HCT116 (cell line): ENCODE measurements at regions of chr7 and their contacts with region 1.

Region 1: DNA sequence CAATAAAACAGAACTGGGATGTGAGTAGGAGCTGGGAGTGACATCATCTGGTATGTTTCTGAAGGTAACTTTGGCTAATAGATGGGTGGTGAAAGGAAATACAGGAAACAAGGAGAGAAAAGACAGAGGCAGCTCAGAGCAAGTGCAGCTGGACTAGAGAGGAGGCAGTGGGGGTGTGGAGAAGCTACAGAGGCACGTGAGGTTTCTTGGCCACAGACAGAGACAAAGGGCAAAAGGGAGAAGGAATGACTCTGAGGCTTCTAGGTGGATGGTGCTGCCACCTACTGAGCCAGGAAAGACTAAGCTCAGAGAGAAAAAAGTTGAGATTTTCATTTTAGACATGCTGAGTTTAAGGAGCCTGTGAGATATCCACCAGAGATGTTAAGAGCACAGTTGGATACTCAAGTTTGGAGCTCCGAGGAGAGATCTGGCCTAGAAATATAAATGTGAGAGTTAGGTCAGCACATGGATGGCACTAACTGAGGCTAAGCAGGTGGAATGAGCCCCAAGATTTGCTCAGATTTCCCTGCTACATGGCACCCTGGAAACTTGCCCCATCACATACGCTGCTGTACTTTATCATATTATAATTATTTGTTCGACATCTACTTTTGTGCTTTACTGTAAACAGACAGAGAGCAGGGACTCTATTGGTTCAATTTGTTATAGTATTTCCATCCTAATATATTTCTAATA is 293.0 kb upstream of the IMMP2L start:
- DNase-seq: peak; percentile 38
- ATAC-seq: peak; percentile 96
- H3K4me3 ChIP-seq: no peak overlapping the region
- H3K27ac ChIP-seq: no peak overlapping the region
- H3K4me1 ChIP-seq: no peaks in the 10 kb centered on the region
- H3K27me3 ChIP-seq: no peaks in the 10 kb centered on the region
- CTCF ChIP-seq: peak; percentile 46 to 70 (median 63); a peak in 5 of 6 replicates
- POLR2A ChIP-seq: no peak
- RAD21 ChIP-seq: peak; percentile 57

Region 2: GRCh38 chr7:111741811-111742240 is 113.5 kb before region 1 on chr7:
- CTCF ChIA-PET with region 1: interaction called, 7 read pairs
- POLR2A ChIA-PET with region 1: no interaction called
- RAD21 ChIA-PET with region 1: interaction called in 1 of 2 experiments, 3 read pairs
- intact Hi-C with region 1: loop called (anchors 5 kb)
- DNase-seq: peak; percentile 75
- ATAC-seq: peak; percentile 96
- H3K4me3 ChIP-seq: no peak overlapping the region
- H3K27ac ChIP-seq: no peak overlapping the region
- H3K4me1 ChIP-seq: no peaks in the 10 kb centered on the region
- H3K27me3 ChIP-seq: no peaks in the 10 kb centered on the region
- CTCF ChIP-seq: peak; percentile 60 to 86 (median 81)
- POLR2A ChIP-seq: no peak
- RAD21 ChIP-seq: peak; percentile 85

Region 3: DNA sequence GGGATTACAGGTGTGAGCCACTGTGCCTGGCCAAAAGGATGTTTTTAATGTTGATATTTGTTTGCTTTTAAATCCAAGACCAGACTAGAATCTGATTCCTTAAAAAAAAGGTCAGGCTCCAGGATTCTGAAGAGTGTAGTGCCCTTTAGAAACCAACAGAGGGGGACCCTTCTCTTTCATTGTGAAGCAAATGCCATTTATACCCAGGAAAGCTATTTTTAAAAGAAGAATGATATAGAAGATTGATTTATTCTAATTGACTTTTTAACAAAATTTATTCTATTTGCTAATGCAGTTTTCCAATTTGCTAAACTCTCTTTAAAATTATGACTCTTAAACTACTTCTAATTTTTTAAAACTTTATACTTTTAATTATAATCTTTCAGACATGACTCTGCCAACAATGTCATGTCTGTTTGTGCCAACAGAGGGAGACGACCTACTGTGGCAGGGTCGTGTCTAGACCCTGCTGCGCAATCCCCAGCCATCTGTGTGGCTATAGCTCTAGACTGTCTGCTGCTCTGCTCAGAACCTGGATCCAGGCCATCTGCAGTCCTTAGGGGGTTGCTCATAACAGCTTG is 92.0 kb before region 1 on chr7:
- CTCF ChIA-PET with region 1: interaction called, 40 read pairs
- POLR2A ChIA-PET with region 1: no interaction called
- RAD21 ChIA-PET with region 1: interaction called, 4 read pairs
- intact Hi-C with region 1: loop called (anchors 1 kb)
- DNase-seq: peak; percentile 57
- ATAC-seq: peak; percentile 91
- H3K4me3 ChIP-seq: no peak overlapping the region
- H3K27ac ChIP-seq: no peak overlapping the region
- H3K4me1 ChIP-seq: no peaks in the 10 kb centered on the region
- H3K27me3 ChIP-seq: no peaks in the 10 kb centered on the region
- CTCF ChIP-seq: peak; percentile 55 to 86 (median 62)
- POLR2A ChIP-seq: no peak
- RAD21 ChIP-seq: peak; percentile 73

Region 4: GRCh38 chr7:111953611-111954010 is 98.3 kb after region 1 on chr7:
- CTCF ChIA-PET with region 1: no interaction called
- POLR2A ChIA-PET with region 1: no interaction called
- RAD21 ChIA-PET with region 1: no interaction called
- intact Hi-C with region 1: no loop called
- DNase-seq: no peak
- ATAC-seq: peak; percentile 63
- H3K4me3 ChIP-seq: no peak overlapping the region
- H3K27ac ChIP-seq: no peak overlapping the region
- H3K4me1 ChIP-seq: no peaks in the 10 kb centered on the region
- H3K27me3 ChIP-seq: no peaks in the 10 kb centered on the region
- CTCF ChIP-seq: no peak
- POLR2A ChIP-seq: no peak
- RAD21 ChIP-seq: peak; percentile 49